ENCODE measurements at regions of chr3 and their contacts with region 1.

Region 1: GRCh38 chr3:42780892-42781700 is 8.0 kb upstream of the CCDC13 start:
- DNase-seq: no peak
- ATAC-seq: peak; percentile 79
- H3K4me3 Mint-ChIP-seq: no peak overlapping the region
- H3K27ac Mint-ChIP-seq: no peak overlapping the region
- H3K4me1 Mint-ChIP-seq: peaks cover 2% of the 10 kb centered on the region
- H3K27me3 Mint-ChIP-seq: no peaks in the 10 kb centered on the region
- CTCF ChIP-seq: peak; percentile 63

Region 2: DNA sequence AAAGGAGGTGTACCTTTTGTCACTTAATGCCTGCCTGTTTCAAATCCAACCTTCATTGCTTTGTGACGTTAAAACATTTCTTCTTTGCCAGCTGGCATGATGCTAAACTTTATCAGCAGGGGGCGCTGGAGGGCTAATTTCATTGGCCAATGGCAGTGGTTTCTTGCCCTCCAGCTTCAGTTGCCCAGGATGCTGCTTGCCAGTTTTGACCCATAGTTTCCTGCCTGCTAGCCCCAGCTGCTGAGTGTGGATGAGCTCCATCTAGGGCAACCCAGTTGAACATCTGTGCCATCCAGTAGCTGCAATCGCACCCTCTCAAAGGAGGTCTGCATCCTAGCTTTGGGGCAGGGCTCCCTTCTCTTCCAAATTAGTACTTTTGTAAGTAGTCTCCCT is 50.2 kb after region 1 on chr3:
- CTCF ChIA-PET with region 1: interaction called, 9 read pairs
- POLR2A ChIA-PET with region 1: no interaction called
- intact Hi-C with region 1: loop called (anchors 1 kb)
- DNase-seq: peak; percentile 56
- ATAC-seq: peak; percentile 78
- H3K4me3 Mint-ChIP-seq: no peak overlapping the region
- H3K27ac Mint-ChIP-seq: no peak overlapping the region
- H3K4me1 Mint-ChIP-seq: peaks cover 4% of the 10 kb centered on the region
- H3K27me3 Mint-ChIP-seq: peaks cover 8% of the 10 kb centered on the region
- CTCF ChIP-seq: no peak

Region 3: DNA sequence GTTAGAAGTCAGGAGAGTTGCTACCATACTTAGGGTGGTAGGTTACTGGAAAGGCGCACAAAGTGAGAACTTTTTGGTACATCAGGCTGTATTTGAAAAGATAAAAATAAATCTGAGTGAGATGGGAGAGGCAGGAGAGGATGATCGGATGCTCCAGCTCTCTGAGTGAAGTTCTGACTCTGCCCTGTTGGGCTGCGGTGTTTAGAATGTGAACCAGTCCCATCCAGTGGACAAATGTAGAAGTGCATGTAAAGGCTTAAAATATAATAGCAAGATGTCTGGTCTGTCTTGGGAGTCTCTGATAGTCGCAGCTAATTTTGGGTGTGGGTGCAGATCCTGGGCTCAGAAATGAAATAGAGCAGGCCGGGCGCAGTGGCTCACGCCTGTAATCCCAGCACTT is 58.5 kb after region 1 on chr3:
- CTCF ChIA-PET with region 1: interaction called, 16 read pairs
- POLR2A ChIA-PET with region 1: no interaction called
- intact Hi-C with region 1: loop called (anchors 1 kb)
- DNase-seq: no peak
- ATAC-seq: peak; percentile 99
- H3K4me3 Mint-ChIP-seq: peak overlapping the region; percentile 63
- H3K27ac Mint-ChIP-seq: peak overlapping the region; percentile 60
- H3K4me1 Mint-ChIP-seq: peaks cover 14% of the 10 kb centered on the region
- H3K27me3 Mint-ChIP-seq: no peaks in the 10 kb centered on the region
- CTCF ChIP-seq: no peak

Region 4: DNA sequence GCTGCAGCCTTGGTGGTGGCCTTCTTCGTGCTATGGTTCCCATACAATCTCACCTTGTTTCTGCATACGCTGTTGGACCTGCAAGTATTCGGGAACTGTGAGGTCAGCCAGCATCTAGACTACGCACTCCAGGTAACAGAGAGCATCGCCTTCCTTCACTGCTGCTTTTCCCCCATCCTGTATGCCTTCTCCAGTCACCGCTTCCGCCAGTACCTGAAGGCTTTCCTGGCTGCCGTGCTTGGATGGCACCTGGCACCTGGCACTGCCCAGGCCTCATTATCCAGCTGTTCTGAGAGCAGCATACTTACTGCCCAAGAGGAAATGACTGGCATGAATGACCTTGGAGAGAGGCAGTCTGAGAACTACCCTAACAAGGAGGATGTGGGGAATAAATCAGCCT is 84.2 kb after region 1 on chr3:
- CTCF ChIA-PET with region 1: no interaction called
- POLR2A ChIA-PET with region 1: no interaction called
- intact Hi-C with region 1: no loop called
- DNase-seq: no peak
- ATAC-seq: no peak
- H3K4me3 Mint-ChIP-seq: no peak overlapping the region
- H3K27ac Mint-ChIP-seq: no peak overlapping the region
- H3K4me1 Mint-ChIP-seq: no peaks in the 10 kb centered on the region
- H3K27me3 Mint-ChIP-seq: no peaks in the 10 kb centered on the region
- CTCF ChIP-seq: no peak

Measured in activated B cell treated with CpG ODN at 0.5 μM for 24 hours (primary cell).